ENCODE measurements at regions of chr4 and their contacts with region 1.

Region 1: DNA sequence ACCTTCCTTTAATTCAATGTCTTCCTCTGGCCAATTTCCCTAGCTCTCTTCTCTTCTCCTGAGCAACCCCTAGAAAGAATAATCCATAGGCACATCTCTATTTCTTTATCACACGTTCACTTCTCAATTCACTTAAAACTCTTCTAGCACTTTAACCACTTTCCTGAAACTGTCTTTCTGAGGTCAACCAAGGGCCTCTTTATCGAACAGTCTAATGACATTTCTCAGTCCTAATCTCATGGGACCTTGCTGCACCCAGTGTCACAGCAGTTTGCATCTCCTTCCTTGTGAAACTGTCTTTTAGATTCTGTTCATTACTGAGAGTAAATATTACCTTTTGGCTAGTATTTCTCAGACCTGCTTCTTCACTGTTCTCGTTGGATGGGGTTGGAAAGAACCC is 285.3 kb upstream of the RASGEF1B start:
- DNase-seq: peak; percentile 23
- ATAC-seq: peak; percentile 64
- H3K4me3 ChIP-seq: no peak overlapping the region
- H3K4me3 Mint-ChIP-seq: peak overlapping the region; percentile 27
- H3K27ac ChIP-seq: peak overlapping the region in 1 of 2 donors; percentile 68
- H3K27ac Mint-ChIP-seq: peak overlapping the region; percentile 16
- H3K4me1 ChIP-seq: peaks cover 42 to 49% of the 10 kb centered on the region in 2 donors
- H3K4me1 Mint-ChIP-seq: peaks cover 54% of the 10 kb centered on the region
- H3K27me3 ChIP-seq: no peaks in the 10 kb centered on the region
- H3K27me3 Mint-ChIP-seq: no peaks in the 10 kb centered on the region
- CTCF ChIP-seq: no peak

Region 2: DNA sequence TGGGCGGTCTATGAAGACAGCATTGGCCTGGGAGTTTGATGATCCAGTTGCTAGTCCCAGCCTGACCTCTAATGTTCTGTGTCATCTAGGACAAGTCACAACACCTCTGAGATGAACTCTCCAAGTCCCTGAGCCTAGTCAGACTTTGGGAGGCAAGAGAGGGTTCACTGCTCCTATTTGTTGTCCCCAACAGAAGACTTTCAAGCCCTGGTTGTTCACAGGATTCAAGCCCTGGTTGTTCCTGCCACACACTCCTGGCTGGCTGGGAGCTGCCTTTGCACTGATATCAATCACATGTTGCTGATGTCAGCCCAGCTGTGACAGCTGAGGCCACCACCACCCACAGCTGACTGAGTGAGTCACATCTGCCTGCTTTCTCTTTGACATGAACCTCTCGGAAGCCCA is 32.0 kb before region 1 on chr4:
- CTCF ChIA-PET with region 1: no interaction called
- POLR2A ChIA-PET with region 1: no interaction called
- intact Hi-C with region 1: loop called (anchors 5 kb)
- DNase-seq: peak; percentile 46
- ATAC-seq: peak; percentile 92
- H3K4me3 ChIP-seq: no peak overlapping the region
- H3K4me3 Mint-ChIP-seq: no peak overlapping the region
- H3K27ac ChIP-seq: no peak overlapping the region
- H3K27ac Mint-ChIP-seq: peak overlapping the region; percentile 61
- H3K4me1 ChIP-seq: peaks cover 6 to 13% of the 10 kb centered on the region in 2 donors
- H3K4me1 Mint-ChIP-seq: peaks cover 17% of the 10 kb centered on the region
- H3K27me3 ChIP-seq: no peaks in the 10 kb centered on the region
- H3K27me3 Mint-ChIP-seq: no peaks in the 10 kb centered on the region
- CTCF ChIP-seq: no peak

Region 3: DNA sequence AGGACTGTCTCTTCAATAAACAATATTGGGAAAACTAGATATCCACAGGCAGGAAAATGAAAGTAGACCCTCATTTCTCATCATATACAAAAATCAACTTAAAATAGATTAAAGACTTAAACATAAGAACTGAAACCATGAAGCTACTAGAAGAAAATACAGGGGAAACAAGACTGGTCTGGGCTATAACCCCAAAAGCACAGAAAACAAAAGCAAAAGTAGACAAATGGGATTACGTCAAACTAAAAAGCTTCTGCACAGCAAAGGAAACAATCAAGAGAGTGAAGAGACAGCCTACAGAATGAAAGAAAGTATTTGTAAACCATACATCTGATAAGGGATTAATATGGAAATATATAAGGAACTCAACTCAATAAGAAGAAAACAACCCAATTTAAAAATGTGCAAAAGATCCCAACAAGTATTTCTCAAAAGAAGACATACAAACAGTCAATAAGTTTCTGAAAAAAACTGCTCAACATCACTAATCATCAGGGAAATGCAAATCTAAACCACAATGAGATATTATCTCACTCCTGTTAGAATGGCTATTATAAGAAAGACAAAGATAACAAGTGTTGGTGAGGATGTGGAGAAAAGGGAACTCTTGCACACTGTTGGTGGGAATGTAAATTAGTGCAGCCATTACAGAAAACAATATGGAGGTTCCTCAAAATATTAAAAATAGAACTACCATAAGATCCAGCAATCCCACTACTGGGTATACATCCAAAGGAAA is 40.0 kb after region 1 on chr4:
- CTCF ChIA-PET with region 1: no interaction called
- POLR2A ChIA-PET with region 1: no interaction called
- intact Hi-C with region 1: loop called (anchors 5 kb)
- DNase-seq: peak; percentile 39
- ATAC-seq: peak; percentile 64
- H3K4me3 ChIP-seq: peak overlapping the region in 1 of 5 experiments; percentile 10
- H3K4me3 Mint-ChIP-seq: peak overlapping the region; percentile 50
- H3K27ac ChIP-seq: peak overlapping the region in 1 of 2 donors; percentile 47
- H3K27ac Mint-ChIP-seq: peak overlapping the region; percentile 66
- H3K4me1 ChIP-seq: peaks cover under 1 to 6% of the 10 kb centered on the region in 2 donors
- H3K4me1 Mint-ChIP-seq: peaks cover 10% of the 10 kb centered on the region
- H3K27me3 ChIP-seq: no peaks in the 10 kb centered on the region
- H3K27me3 Mint-ChIP-seq: no peaks in the 10 kb centered on the region
- CTCF ChIP-seq: no peak